Astrocyte of the cerebellum (primary cell): ENCODE measurements at regions of chr22 and their contacts with region 1.

Region 1: DNA sequence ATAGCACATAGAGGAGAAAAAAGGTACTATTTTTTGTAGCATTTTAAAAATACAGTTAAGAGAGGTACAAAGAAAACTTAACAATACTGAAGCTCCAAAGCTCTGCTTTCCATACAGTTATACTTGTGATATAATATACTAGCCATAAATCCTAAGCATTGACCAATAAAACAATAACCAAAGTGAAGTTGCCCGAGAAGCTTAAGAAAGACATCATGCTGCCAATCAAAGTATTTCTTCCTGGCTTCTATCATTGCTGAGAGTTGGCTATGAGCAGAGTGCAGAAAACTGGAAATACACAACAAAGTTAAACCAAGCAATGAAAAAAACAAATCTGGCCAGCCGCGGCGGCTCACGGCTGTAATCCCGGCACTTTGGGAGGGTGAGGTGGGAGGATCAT is 84.2 kb downstream of the RBFOX2 start:
- DNase-seq: no peak
- H3K4me3 ChIP-seq: no peak overlapping the region
- CTCF ChIP-seq: no peak

Region 2: GRCh38 chr22:35568751-35569725 is 375.4 kb before region 1 on chr22:
- in situ Hi-C with region 1: no loop called
- DNase-seq: peak; percentile 31
- H3K4me3 ChIP-seq: no peak overlapping the region
- CTCF ChIP-seq: no peak

Region 3: DNA sequence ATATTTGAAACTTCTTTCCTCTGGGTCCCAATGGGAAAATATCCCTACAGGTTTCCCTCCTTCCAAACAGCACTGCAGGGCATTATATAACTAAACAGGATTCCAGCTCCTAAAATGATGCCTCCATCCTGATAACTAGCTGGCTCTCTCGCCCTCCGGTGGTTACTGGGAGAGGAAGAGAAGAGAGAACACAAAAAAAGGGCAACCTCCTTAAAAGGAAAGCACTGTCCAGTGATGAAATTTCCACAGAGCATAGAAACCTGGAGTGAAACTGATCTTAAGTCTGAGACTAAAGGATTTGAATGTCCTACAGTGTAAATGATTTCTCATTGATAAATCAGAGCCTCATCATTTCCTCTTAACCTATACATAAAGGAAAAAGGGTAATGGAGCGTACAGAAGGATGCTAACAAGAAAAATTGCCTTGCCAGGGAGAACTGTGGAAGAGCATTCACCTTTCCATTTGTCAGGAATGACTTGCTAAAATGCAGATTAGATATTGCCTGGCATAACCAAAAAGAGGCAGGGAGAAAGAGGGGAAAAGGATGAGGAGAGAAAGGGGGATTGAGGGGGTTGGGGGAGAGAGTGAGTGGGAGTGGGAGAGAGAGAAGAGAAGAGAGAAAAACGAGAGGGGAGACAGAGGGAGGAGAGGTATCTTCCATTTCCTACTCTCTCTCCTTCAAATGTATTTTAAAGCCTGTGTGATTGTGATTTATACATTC is 105.4 kb before region 1 on chr22:
- in situ Hi-C with region 1: loop called (anchors 5 kb)
- DNase-seq: peak; percentile 54
- H3K4me3 ChIP-seq: peak overlapping the region; percentile 58
- CTCF ChIP-seq: peak; percentile 60

Region 4: DNA sequence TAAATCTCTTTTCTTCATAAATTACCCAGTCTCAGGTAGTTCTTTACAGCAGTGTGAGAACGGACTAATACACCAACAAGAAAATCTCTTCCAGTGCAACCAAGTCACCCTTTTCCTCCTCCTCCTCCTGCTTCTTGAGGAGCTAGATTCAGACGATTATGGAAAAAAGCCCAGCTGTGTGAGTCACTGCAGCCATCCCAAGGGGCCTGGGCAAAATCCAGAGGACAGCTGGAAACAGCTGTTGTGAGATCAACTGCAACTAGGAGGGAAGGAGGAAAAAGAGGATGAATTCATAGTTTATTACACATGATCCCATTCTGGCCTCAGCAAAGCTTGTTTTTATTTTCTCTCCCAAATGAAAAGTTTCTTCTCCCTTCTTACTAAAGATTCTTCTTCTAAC is 51.3 kb after region 1 on chr22:
- in situ Hi-C with region 1: loop called (anchors 5 kb)
- DNase-seq: peak; percentile 95
- H3K4me3 ChIP-seq: no peak overlapping the region
- CTCF ChIP-seq: no peak

Region 5: DNA sequence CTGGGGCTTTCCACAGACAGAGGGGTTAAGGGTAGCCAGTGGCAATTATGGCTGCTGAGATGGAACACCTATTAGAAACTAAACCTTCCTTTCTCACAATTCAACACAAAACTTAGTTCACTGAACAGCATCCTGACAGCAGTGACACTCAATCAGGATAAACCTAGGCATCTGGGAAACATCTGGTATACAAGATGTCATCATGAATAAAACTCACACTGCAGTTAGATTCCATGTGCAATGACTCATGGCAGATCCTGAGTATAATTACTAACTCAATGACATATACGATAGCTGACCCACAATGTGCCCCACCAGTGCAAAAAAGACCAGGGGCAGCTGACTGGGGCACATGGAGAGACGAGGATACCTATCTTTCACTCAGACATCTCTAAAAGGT is 66.4 kb after region 1 on chr22:
- in situ Hi-C with region 1: no loop called
- DNase-seq: no peak
- H3K4me3 ChIP-seq: no peak overlapping the region
- CTCF ChIP-seq: no peak